ENCODE measurements at regions of chr12 and their contacts with region 1.

Region 1: GRCh38 chr12:104494137-104494792 is 37.5 kb downstream of the CHST11 start:
- DNase-seq: peak; percentile 85
- H3K4me3 Mint-ChIP-seq: peak overlapping the region; percentile 52
- H3K27ac Mint-ChIP-seq: peak overlapping the region; percentile 70
- H3K4me1 Mint-ChIP-seq: peaks cover 82% of the 10 kb centered on the region
- H3K27me3 Mint-ChIP-seq: no peaks in the 10 kb centered on the region

Region 2: DNA sequence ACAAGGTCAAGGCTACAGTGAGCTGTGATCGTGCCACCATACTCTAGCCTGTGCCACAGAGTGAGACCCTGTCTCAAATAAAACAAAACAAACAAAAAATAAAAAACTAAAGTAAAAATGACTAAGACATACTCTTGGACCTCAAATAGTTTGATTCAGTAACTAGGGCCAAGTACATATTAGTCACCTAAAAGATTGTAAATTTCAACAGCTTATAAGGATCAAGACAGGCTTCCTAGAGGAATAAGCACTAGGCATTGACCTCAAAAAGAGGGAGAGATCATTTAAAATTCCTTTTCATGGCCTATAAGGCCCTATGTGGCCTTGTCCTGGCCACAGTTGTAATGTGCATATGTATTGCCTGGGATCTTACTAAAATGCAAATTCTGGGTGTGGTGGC is 83.5 kb before region 1 on chr12:
- CTCF ChIA-PET with region 1: no interaction called
- intact Hi-C with region 1: no loop called
- DNase-seq: no peak
- H3K4me3 Mint-ChIP-seq: no peak overlapping the region
- H3K27ac Mint-ChIP-seq: no peak overlapping the region
- H3K4me1 Mint-ChIP-seq: peaks cover 14% of the 10 kb centered on the region
- H3K27me3 Mint-ChIP-seq: no peaks in the 10 kb centered on the region

Region 3: GRCh38 chr12:104420868-104421267 is 73.4 kb before region 1 on chr12:
- CTCF ChIA-PET with region 1: no interaction called
- intact Hi-C with region 1: loop called (anchors 2 kb)
- DNase-seq: peak; percentile 42
- H3K4me3 Mint-ChIP-seq: no peak overlapping the region
- H3K27ac Mint-ChIP-seq: no peak overlapping the region
- H3K4me1 Mint-ChIP-seq: peaks cover 7% of the 10 kb centered on the region
- H3K27me3 Mint-ChIP-seq: no peaks in the 10 kb centered on the region

Region 4: DNA sequence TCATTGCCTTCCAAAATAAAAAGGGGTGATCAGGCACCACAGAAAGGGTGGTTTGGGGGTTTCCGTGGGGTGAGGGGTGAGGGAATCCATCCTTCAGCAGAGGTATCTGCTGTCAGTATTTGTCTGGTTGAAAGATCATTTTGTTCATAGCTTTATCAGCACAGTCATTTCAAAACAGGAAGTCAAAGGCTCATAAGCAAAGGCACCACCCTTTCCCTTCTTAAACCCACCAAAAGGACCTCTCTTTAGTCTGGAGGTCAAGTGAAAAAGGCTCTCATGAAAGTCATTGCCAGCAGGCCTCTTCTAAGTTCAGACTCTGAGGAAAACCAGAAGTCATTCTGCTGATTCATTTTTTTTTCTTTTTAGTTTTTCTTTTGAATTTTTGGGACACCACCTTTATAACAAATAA is 31.3 kb before region 1 on chr12:
- CTCF ChIA-PET with region 1: interaction called, 3 read pairs
- intact Hi-C with region 1: loop called (anchors 1 kb)
- DNase-seq: peak; percentile 65
- H3K4me3 Mint-ChIP-seq: peak overlapping the region; percentile 49
- H3K27ac Mint-ChIP-seq: peak overlapping the region; percentile 84
- H3K4me1 Mint-ChIP-seq: peaks cover 75% of the 10 kb centered on the region
- H3K27me3 Mint-ChIP-seq: no peaks in the 10 kb centered on the region

Region 5: DNA sequence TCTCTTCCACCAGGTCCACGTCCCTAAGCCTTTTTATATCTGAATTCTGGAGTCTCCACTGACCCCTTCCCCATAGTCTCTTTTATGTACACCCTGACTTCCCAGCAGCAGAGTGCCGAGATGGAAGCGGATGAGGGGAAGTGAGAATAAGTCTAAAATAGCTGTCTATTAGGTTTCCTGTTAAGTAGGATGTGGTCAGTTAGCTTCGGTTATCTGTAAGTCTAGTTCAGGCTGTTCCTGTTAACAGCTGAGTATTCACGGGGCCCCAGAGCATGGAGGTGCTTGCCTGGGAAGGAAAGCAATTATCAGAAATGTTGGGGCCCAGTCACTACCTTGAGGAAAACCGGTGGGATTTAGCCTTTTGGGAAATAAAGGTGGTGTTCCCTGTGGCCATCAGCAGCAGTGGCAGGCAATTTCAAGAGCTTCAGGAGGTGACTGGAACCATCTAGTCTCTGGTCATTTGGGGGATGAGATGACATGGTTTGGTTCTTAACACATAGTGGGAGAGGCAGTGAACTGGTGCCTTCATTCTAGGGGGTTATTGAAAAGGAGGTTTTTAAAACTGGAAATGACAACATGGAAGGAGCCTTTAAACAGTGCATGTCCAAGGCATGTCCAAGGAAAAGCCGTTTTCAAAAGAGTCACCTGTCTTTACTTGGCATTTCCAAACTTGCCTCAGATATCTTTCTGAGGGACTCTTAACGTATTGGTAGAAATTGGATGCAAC is 15.7 kb before region 1 on chr12:
- CTCF ChIA-PET with region 1: interaction called, 3 read pairs
- intact Hi-C with region 1: loop called (anchors 1 kb)
- DNase-seq: peak; percentile 63
- H3K4me3 Mint-ChIP-seq: peak overlapping the region; percentile 83
- H3K27ac Mint-ChIP-seq: peak overlapping the region; percentile 96
- H3K4me1 Mint-ChIP-seq: peaks cover 68% of the 10 kb centered on the region
- H3K27me3 Mint-ChIP-seq: no peaks in the 10 kb centered on the region

Region 6: GRCh38 chr12:104569346-104570173 is 75.3 kb after region 1 on chr12:
- CTCF ChIA-PET with region 1: no interaction called
- intact Hi-C with region 1: loop called (anchors 2 kb)
- DNase-seq: peak; percentile 64
- H3K4me3 Mint-ChIP-seq: no peak overlapping the region
- H3K27ac Mint-ChIP-seq: peak overlapping the region; percentile 17
- H3K4me1 Mint-ChIP-seq: peaks cover 49% of the 10 kb centered on the region
- H3K27me3 Mint-ChIP-seq: no peaks in the 10 kb centered on the region

Region 7: GRCh38 chr12:104890476-104891096 is 396.3 kb after region 1 on chr12:
- CTCF ChIA-PET with region 1: no interaction called
- intact Hi-C with region 1: no loop called
- DNase-seq: peak; percentile 10
- H3K4me3 Mint-ChIP-seq: no peak overlapping the region
- H3K27ac Mint-ChIP-seq: peak overlapping the region; percentile 68
- H3K4me1 Mint-ChIP-seq: peaks cover 13% of the 10 kb centered on the region
- H3K27me3 Mint-ChIP-seq: peaks cover 6% of the 10 kb centered on the region